MCF 10A (cell line): ENCODE measurements at regions of chr3 and their contacts with region 1.

Region 1: DNA sequence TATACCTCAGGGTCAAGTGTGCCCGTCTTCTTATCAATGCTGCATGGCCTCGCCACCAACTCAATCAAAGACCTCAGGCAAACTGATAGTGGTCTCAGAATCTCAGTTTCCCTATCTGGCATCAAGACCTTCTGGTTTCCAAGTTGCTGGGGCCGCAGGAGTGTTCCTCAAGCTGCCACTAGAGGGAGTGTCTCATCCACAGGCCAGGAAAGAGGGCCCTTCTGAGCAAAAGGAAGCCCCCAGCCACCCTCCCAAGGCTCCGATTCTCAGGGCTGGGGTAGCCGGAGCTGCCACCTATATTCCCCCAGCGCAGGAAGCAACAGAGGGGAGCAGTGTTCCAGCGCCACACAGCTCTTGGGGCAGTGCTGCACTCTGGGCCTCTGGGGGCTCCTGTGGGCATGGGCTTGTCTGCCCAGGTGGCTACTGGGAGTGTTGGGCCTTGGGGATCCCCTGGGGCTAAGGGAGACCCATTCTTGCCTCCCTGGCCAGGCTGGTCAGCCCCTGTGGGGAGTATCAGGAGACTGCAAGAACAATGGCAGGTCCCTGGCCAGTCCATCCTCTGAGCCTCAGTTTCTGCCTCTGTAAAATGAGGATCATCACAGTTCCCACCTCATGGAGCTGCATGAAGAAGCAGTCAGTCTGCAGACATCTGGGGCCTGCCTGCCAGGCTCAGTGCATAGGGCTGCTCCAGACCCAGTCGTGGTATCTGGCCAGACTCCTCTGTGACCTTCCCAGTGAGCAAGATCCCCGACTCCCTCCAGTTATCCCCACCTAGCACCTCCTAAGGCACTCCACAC is 23.4 kb upstream of the SEC13 start:
- DNase-seq: peak; percentile 50
- H3K4me3 Mint-ChIP-seq: no peak overlapping the region
- H3K27ac Mint-ChIP-seq: no peak overlapping the region
- H3K4me1 Mint-ChIP-seq: no peaks in the 10 kb centered on the region
- H3K27me3 Mint-ChIP-seq: peaks cover 31% of the 10 kb centered on the region
- CTCF ChIP-seq: peak; percentile 91

Region 2: DNA sequence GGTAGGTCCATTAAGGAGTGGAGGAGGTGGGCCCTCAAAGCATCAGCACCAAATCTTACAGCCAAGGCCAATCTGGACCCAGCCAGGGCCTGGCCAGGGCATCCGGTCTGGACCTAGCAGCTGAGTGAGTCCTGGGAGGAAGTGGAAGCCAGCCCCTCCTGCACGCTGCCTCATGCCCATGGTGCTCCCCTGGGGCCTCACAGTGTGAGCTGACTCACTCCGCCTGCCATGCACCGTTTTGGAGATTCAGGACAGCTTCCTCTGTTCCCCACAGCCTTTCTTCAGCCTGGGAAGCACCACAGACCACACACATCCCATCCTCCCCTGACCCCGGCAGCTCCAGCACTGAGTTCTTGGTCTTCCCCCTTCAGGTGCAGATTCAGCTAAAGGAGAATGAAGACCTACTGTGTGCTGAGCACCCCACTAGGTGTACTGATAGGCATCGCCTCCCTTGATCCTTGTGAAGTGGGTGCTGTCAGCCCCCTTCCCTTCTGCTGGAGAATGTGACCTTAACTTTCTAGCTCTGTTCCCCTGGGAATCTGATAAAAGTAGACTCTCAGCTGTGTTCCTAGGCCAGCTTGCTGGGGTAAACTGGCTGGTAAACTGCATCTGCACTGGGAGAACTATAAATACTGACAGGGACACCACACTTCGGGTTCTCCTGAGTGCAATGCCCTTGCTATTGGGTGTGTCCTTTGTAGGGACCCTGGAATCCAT is 13.4 kb after region 1 on chr3:
- CTCF ChIA-PET with region 1: interaction called, 20 read pairs
- POLR2A ChIA-PET with region 1: no interaction called
- intact Hi-C with region 1: no loop called
- DNase-seq: peak; percentile 70
- H3K4me3 Mint-ChIP-seq: no peak overlapping the region
- H3K27ac Mint-ChIP-seq: no peak overlapping the region
- H3K4me1 Mint-ChIP-seq: no peaks in the 10 kb centered on the region
- H3K27me3 Mint-ChIP-seq: peaks cover 40% of the 10 kb centered on the region
- CTCF ChIP-seq: no peak

Region 3: DNA sequence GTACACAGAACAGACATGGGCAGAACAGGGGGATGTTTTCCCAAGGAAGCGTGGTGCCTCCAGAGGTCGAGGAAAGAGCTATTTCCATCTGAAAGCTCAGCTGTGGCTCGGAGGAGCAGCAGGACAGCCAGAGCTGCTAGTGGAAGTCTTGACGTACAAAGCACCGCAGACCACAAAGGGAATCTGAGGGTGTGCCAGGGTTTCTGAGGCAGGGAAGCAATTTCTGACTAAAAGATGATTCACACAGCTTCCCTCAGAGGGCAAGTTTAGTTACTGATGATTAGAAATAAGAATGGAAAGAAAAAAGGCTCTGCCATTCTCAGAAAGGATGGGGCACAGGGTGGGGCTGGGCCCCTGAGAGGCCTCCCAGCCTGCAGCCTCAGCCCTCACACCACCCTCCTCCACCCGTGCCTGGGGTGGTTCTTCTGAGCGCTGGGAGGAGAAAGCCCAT is 22.3 kb after region 1 on chr3:
- CTCF ChIA-PET with region 1: interaction called, 15 read pairs
- POLR2A ChIA-PET with region 1: no interaction called
- intact Hi-C with region 1: no loop called
- DNase-seq: peak; percentile 88
- H3K4me3 Mint-ChIP-seq: no peak overlapping the region
- H3K27ac Mint-ChIP-seq: peak overlapping the region; percentile 44
- H3K4me1 Mint-ChIP-seq: peaks cover 12% of the 10 kb centered on the region
- H3K27me3 Mint-ChIP-seq: peaks cover 8% of the 10 kb centered on the region
- CTCF ChIP-seq: no peak

Region 4: DNA sequence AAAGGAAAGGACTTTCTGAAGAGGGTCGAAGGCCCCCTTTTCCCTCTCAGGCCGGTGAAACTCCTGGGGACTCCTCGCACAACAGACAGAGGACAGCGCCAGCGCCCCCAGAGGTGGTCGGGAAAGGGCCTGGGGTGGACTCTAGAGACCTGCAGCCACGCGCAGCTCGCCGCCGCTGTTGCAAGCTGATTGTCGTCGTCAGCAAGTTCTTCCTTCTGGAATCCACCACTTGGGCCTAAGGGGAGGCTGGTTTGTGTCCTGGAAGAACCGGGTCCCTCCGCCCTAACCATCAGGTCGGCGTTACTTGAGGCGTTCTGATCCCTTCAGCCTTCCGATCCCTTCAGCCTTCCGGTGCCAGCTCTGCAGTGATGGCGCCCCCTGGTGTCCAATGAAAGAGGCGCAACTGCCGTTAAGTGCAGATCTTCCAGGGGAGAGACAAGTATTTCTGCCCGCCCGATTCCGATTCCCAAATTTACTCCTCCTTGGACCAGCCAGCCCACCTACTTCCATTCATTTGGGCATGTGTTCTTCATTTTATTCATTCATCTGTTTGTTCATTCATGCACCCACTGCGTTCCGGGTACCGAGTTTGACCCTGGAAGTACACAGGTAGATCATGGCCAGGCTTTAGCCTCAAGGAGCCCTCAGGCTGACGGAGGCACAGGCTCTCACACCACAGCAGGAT is 394.5 kb after region 1 on chr3:
- CTCF ChIA-PET with region 1: interaction called, 103 read pairs
- POLR2A ChIA-PET with region 1: no interaction called
- intact Hi-C with region 1: loop called (anchors 1 kb)
- DNase-seq: peak; percentile 62
- H3K4me3 Mint-ChIP-seq: no peak overlapping the region
- H3K27ac Mint-ChIP-seq: no peak overlapping the region
- H3K4me1 Mint-ChIP-seq: no peaks in the 10 kb centered on the region
- H3K27me3 Mint-ChIP-seq: peaks cover 69% of the 10 kb centered on the region
- CTCF ChIP-seq: peak; percentile 83

Region 5: GRCh38 chr3:10992017-10992941 is 647.9 kb after region 1 on chr3 and contains the start of gene SLC6A1:
- CTCF ChIA-PET with region 1: no interaction called
- POLR2A ChIA-PET with region 1: no interaction called
- intact Hi-C with region 1: no loop called
- DNase-seq: no peak
- H3K4me3 Mint-ChIP-seq: no peak within 1 kb of the TSS
- H3K27ac Mint-ChIP-seq: no peak within 1 kb of the TSS
- H3K4me1 Mint-ChIP-seq: no peaks in the 10 kb centered on the region
- H3K27me3 Mint-ChIP-seq: peaks cover 78% of the 10 kb centered on the region
- CTCF ChIP-seq: no peak
- total RNA-seq, gene SLC6A1: not detected in 2 replicates